ENCODE measurements at regions of chr2 and their contacts with region 1.

Region 1: DNA sequence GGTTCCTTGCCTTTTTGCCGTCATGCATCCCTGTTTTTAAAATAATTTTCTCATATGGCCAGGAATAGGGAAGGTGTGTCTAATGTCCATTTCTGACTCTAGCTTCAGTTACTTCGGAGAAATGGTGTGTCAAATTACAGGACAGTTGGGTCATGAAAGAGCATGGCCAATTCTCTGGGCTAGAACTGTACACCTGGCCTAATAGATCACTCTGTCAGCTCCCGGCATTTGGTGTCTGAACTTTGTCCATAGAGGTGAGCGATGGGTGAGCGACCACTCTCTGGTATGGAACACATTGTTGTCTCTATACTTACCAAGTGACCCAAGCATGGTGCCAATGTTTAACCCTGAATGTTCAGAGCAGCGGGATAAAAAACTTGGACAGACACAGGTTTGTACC is 38.3 kb upstream of the ASB18 start:
- DNase-seq: peak in 1 of 2 donors; percentile 31
- ATAC-seq: peak; percentile 98
- H3K4me3 ChIP-seq: no peak overlapping the region
- H3K27ac ChIP-seq: peak overlapping the region in 1 of 4 donors; percentile 57
- H3K4me1 ChIP-seq: peaks cover 16% of the 10 kb centered on the region in 2 donors
- H3K27me3 ChIP-seq: no peaks in the 10 kb centered on the region
- CTCF ChIP-seq: no peak
- POLR2A ChIP-seq: no peak

Region 2: DNA sequence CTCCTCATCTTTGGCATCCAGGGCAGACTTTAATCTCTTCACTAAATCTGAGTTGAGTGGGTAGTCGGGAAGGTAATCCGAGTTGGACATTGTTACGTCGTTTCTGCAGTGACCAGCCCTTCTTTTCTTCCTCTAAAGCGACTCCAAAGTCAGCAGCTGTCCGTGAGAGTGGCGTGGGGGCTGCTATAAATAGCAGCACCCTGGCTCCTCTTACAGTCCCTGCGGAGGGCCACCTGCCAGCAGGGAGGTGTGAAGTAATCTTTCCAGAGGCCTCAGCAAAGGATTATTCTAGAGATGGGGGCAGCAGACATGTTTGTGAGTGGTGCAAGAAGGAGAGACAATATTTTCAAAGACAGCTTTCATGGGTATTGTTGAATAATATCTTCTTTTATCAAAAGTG is 38.3 kb before region 1 on chr2 and contains the start of gene ASB18:
- in situ Hi-C with region 1: no loop called
- intact Hi-C with region 1: loop called (anchors 2 kb)
- DNase-seq: peak; percentile 78 to 93
- ATAC-seq: peak; percentile 72 to 87
- H3K4me3 ChIP-seq: peak within 1 kb of the TSS in 3 of 4 donors; percentile 5 to 22 (median 21)
- H3K27ac ChIP-seq: peak within 1 kb of the TSS; percentile 77 to 90 (median 82)
- H3K4me1 ChIP-seq: peaks cover 44 to 45% of the 10 kb centered on the region in 2 donors
- H3K27me3 ChIP-seq: no peaks in the 10 kb centered on the region
- CTCF ChIP-seq: no peak
- POLR2A ChIP-seq: no peak
- total RNA-seq, gene ASB18: 0.16 to 0.17 TPM in 2 of 4 donors, not detected in the others

Region 3: DNA sequence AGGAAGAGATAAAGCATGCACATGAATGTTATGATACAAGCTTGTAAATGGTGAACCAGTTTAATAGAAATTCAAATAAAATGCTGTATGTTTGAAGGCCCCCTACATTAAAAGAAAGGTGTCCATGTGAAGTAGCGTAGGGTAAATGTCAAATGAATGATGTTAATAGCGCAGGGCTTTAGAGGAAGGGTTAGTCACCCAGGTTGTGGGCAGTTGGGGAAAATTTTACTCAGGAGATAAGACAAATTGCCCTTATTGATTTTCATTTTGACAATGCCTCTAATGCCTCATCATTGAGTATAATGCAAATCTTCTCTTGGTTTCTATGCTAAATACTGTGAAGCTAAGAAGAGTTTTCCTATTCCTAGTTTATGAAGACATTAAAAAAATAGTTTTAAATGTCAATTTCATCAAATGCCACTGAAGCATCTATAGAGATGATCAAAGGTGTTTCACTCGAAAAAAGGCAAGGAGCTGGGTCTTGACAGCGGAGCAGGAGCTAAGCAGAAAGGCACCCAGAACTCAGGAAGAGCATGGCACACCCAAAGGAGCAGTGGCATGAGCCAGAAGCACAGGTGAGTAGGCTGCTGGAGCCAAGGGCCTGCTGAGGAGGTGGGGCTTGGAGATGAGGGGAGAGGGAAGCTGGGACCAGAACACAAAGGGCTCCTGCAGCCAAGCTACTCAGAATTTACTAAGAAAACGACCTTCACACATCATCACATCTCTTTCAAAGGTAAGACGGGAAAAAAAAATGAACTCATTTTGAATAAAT is 137.7 kb after region 1 on chr2:
- in situ Hi-C with region 1: no loop called
- intact Hi-C with region 1: no loop called
- DNase-seq: no peak
- ATAC-seq: no peak
- H3K4me3 ChIP-seq: no peak overlapping the region
- H3K27ac ChIP-seq: no peak overlapping the region
- H3K4me1 ChIP-seq: no peaks in the 10 kb centered on the region
- H3K27me3 ChIP-seq: peaks cover 0 to 3% (median 0%) of the 10 kb centered on the region in 3 donors
- CTCF ChIP-seq: no peak
- POLR2A ChIP-seq: no peak

Measured in gastrocnemius medialis (tissue), 4 donors.